Activated CD4-positive, alpha-beta T cell treated with anti-CD3 and anti-CD28 coated beads, Interleukin-2, amount 10 ng/mL, durations not matched to agents 7 days and 5 days (primary cell): ENCODE measurements at regions of chr12 and their contacts with region 1.

Region 1: GRCh38 chr12:111444925-111445725 is 39.4 kb downstream of the SH2B3 start:
- DNase-seq: peak; percentile 91
- H3K4me3 Mint-ChIP-seq: peak overlapping the region; percentile 35
- H3K27ac Mint-ChIP-seq: peak overlapping the region; percentile 88
- H3K4me1 Mint-ChIP-seq: peaks cover 73% of the 10 kb centered on the region
- H3K27me3 Mint-ChIP-seq: no peaks in the 10 kb centered on the region

Region 2: DNA sequence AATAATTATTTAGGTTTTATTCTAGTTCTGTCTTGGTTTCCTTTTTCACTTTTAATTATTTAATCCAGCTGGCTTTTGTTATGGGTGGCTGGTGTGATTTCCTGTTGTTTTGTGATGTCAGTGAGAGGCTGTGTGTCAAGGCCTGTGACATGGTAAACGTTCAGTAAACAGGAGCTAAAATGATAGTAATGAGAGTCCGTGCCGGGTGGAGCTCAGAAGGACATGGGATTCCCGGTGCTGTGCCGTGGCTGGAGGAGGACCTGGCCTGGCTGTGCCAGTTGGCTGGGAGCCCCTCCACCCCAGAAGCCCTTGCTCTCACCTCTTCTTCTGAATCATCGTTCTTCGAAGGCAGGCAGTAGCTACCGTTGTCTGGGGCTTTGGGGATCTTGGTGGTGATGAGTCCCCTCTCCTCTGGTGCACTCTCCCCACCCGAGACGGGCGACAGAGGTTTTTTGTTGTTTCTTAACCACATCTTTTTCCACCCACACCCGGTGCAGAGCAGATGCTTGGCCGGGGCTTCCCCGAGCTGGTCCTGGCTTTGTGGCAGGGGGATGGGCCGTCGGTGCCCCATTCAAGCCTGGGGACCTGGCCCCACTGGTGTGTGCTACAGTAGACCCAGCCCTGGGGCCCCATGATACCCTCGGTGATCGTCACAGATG is 10.3 kb before region 1 on chr12:
- CTCF ChIA-PET with region 1: interaction called, 46 read pairs
- POLR2A ChIA-PET with region 1: interaction called, 11 read pairs
- DNase-seq: peak; percentile 88
- H3K4me3 Mint-ChIP-seq: peak overlapping the region; percentile 64
- H3K27ac Mint-ChIP-seq: peak overlapping the region; percentile 98
- H3K4me1 Mint-ChIP-seq: peaks cover 93% of the 10 kb centered on the region
- H3K27me3 Mint-ChIP-seq: no peaks in the 10 kb centered on the region